ENCODE measurements at regions of chr15 and their contacts with region 1.

Region 1: DNA sequence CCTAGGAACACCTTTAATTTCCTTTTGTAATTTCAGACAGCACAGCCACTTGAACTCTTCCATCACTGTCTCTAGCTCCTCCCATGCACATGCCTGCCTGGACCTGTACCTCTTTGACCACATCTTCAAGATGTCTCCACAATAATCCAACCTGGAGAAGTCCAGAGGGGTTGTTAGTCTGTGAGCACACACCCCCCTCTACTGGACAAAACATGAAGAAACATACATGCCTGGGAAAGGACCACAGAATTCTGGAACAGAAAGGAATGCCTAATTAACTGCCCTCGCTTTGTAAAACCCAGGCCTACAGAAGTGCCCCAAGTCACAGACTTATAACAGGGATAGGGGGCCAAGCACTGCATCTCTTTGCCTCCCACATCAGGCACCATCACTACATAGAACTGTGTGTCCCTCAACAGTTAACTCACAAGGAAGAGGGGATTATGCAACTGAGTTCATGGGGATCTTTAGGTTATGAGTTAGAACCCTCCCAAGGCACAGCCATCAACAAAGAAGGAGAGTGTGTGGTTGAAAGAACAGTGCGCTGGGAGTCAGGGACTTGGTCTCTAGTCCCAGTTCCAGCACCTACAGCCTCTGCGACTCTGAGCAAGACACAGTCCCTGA is 61.7 kb downstream of the FMN1 start:
- DNase-seq: no peak
- ATAC-seq: peak; percentile 57

Region 2: DNA sequence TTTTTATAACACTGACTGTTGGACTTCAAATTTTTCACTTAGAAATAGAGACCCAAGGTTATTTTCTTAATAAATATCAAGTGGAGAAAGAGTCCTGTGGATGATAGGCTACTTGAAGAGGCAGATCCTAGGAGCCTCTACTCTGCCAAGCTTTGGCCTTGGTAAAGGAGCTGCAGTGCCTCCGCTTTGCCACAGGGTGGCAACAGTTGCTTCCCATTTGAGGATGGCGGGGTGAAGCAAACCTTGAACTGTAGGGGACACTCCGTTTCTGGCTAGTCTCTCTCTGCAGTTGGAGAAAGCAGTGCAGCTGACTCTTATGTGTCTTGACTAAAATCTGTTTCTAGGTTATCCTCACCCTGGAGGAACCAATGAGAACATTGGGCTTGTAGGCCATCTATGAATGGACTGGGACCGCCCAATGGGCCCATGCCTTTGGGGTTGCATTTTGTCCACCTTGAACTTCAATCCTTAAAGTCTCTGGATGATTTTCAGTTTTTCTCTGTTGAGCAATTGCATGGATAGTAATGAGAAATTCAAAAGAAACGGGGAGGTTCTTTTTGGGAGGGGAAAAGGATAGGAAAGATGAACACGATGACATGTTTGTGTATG is 481.5 kb before region 1 on chr15:
- intact Hi-C with region 1: loop called (anchors 10 kb)
- DNase-seq: no peak
- ATAC-seq: no peak

Region 3: GRCh38 chr15:32682569-32682968 is 450.3 kb before region 1 on chr15:
- intact Hi-C with region 1: no loop called
- DNase-seq: no peak
- ATAC-seq: no peak

Region 4: GRCh38 chr15:33460149-33460805 is 327.4 kb after region 1 on chr15:
- intact Hi-C with region 1: no loop called
- DNase-seq: no peak
- ATAC-seq: no peak